Mammary epithelial cell (primary cell): ENCODE measurements at regions of chr16 and their contacts with region 1.

Region 1: GRCh38 chr16:74695450-74696422 is 4.9 kb downstream of the MLKL start:
- DNase-seq: peak; percentile 83
- H3K4me3 ChIP-seq: peak overlapping the region; percentile 38 to 49 (median 46)
- H3K27ac ChIP-seq: no peak overlapping the region
- H3K4me1 ChIP-seq: peaks cover 17% of the 10 kb centered on the region
- H3K27me3 ChIP-seq: no peaks in the 10 kb centered on the region
- CTCF ChIP-seq: no peak

Region 2: DNA sequence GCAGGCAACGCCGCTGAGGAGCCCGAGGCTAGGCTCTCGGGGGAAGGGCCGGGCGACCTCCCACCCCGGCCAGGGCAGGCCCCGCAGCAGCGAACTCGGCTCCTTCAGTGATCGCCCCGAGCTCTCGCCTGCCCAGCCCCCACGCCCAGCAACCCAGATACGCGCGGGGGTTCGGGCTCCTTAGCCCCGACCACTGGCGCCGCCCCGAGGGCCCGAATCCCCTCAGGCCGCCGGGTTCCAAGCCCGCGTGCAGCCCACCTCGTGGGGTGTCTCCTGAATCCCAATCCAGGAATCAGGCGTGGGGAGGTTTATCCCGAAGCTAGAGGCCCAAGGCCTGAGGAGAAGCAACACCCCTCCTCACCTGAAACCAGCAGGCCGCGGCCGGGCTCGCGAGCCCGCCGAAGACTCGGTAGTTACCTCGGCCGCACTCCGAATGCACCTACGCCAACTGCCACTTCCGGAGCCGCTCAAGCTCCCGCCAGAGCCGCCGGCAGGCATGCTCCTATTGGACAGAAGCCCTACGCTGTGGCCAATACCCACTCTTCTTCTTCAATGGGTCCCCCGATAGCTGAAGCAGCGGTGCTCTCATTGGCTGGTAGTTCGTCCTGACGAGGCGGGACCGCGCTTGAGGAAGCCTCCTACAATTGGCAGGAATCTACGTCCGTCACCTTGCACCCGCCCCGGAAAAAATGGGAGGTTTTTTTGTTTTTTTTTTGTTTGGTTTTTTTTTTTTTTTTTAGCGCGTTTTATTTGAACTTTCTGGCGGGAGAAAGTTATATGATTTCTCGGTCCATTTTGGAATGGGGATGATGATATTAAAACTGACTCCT is 29.1 kb before region 1 on chr16 and contains the start of gene RFWD3:
- CTCF ChIA-PET with region 1: no interaction called
- dilution Hi-C with region 1: no loop called
- in situ Hi-C with region 1: no loop called
- intact Hi-C with region 1: loop called (anchors 2 kb)
- DNase-seq: peak; percentile 97
- H3K4me3 ChIP-seq: peak within 1 kb of the TSS; percentile 84 to 96 (median 95)
- H3K27ac ChIP-seq: peak within 1 kb of the TSS; percentile 93
- H3K4me1 ChIP-seq: peaks cover 6% of the 10 kb centered on the region
- H3K27me3 ChIP-seq: no peaks in the 10 kb centered on the region
- CTCF ChIP-seq: no peak
- total RNA-seq, gene RFWD3: 33.2 to 59.3 TPM

Region 3: GRCh38 chr16:74680681-74681080 is 15.1 kb before region 1 on chr16:
- CTCF ChIA-PET with region 1: interaction called, 10 read pairs
- dilution Hi-C with region 1: no loop called
- in situ Hi-C with region 1: no loop called
- intact Hi-C with region 1: no loop called
- DNase-seq: no peak
- H3K4me3 ChIP-seq: no peak overlapping the region
- H3K27ac ChIP-seq: no peak overlapping the region
- H3K4me1 ChIP-seq: no peaks in the 10 kb centered on the region
- H3K27me3 ChIP-seq: no peaks in the 10 kb centered on the region
- CTCF ChIP-seq: no peak

Region 4: DNA sequence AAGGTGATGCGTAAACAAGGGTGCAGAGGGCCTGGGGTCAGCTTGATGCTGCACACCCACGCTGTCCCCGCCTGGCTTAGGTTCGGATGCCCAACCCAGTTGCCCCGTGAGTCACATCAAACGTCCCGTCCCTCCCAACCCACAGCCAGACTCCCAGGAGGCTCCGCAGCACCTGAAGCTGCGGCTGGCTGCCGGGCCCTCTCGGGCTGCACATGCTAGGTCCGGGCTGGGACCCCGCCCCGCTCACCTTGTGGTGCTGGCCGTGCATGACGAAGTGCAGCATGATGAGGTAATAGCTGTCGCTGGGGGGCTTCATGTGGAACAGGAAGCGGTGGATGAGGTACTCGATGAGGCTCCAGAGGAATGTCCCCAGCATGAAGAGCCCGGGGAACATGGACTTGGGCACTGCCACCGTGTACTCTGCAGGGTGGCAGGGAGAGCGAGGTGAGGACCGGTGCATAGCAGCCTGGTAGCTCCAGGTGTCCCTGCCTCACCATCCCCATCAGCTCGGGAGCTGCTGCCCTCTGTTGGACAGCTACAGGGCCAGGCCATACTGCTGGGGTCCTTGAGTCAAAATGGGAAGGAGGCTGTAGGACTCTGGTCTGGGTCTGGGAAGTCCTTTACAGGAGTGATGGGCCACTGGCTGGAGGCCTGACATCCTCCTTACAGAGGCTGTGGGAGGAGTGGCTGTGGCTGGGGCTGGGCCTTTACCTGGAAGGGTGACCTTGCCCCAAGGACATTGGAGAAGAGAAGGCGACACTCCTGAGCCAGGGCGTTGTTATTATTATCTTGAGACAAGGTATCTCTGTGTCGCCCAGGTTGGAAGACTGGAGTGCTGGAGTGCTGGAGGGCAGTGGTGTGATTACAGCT is 23.2 kb after region 1 on chr16:
- CTCF ChIA-PET with region 1: interaction called, 16 read pairs
- dilution Hi-C with region 1: no loop called
- in situ Hi-C with region 1: no loop called
- intact Hi-C with region 1: no loop called
- DNase-seq: no peak
- H3K4me3 ChIP-seq: no peak overlapping the region
- H3K27ac ChIP-seq: no peak overlapping the region
- H3K4me1 ChIP-seq: no peaks in the 10 kb centered on the region
- H3K27me3 ChIP-seq: no peaks in the 10 kb centered on the region
- CTCF ChIP-seq: no peak

Region 5: GRCh38 chr16:74743668-74744299 is 48.0 kb after region 1 on chr16:
- CTCF ChIA-PET with region 1: no interaction called
- dilution Hi-C with region 1: loop called (anchors 5 kb)
- in situ Hi-C with region 1: no loop called
- intact Hi-C with region 1: no loop called
- DNase-seq: peak; percentile 65
- H3K4me3 ChIP-seq: no peak overlapping the region
- H3K27ac ChIP-seq: peak overlapping the region; percentile 65
- H3K4me1 ChIP-seq: peaks cover 37% of the 10 kb centered on the region
- H3K27me3 ChIP-seq: no peaks in the 10 kb centered on the region
- CTCF ChIP-seq: no peak

Region 6: DNA sequence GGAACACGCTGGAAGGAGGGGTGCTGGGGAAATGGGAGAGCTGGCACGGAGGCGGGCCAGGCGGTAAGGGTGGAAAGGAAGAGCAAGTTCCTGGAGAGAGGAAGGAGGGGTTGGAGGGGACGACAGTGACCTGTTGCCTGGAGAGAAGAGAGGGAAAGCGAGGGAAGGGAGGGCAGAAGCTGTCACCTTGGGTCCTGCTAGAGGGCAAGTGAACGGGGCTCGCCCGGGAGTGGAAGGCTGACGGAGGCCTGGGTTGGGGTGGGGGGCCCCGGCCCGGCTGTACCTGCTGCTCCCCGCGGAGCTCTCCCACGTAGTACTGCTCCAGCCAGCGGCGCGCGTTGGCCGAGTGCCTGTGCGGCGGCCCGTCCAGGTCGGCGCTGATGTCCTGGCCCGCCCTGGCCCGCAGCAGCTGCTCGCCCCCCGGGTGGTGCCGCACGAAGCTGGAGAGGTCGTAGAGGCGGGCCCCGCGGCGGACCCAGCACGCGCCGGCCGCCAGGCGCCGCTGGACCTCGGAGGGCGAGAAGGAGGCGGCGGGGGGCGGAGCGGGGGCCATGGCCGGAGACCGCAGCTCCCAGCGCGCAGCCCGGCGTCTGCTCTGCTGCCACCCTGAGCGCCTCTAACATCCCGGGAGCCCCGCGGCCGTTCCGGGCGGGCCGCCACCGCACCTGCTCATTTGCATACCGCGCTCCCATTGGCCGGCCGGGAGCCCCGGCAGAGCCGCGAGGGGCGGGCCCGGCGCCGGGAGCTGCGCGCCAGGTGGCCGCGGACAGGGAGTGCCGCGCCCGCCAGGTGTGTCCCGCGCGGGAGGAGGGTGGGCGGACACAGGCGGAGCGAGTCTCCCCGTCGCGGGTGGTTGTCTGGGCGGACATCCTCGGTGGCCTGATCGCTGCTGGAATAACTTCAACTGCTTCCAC is 78.7 kb after region 1 on chr16 and contains the start of gene FA2H:
- CTCF ChIA-PET with region 1: no interaction called
- dilution Hi-C with region 1: no loop called
- in situ Hi-C with region 1: no loop called
- intact Hi-C with region 1: no loop called
- DNase-seq: peak; percentile 85
- H3K4me3 ChIP-seq: peak within 1 kb of the TSS; percentile 36 to 53 (median 49)
- H3K27ac ChIP-seq: no peak within 1 kb of the TSS
- H3K4me1 ChIP-seq: peaks cover 10% of the 10 kb centered on the region
- H3K27me3 ChIP-seq: no peaks in the 10 kb centered on the region
- CTCF ChIP-seq: peak in 1 of 2 donors; percentile 1
- total RNA-seq, gene FA2H: not detected

Region 7: GRCh38 chr16:74813109-74813641 is 117.4 kb after region 1 on chr16:
- CTCF ChIA-PET with region 1: no interaction called
- dilution Hi-C with region 1: no loop called
- in situ Hi-C with region 1: no loop called
- intact Hi-C with region 1: no loop called
- DNase-seq: peak; percentile 52
- H3K4me3 ChIP-seq: no peak overlapping the region
- H3K27ac ChIP-seq: no peak overlapping the region
- H3K4me1 ChIP-seq: peaks cover 5% of the 10 kb centered on the region
- H3K27me3 ChIP-seq: no peaks in the 10 kb centered on the region
- CTCF ChIP-seq: peak; percentile 88 to 97

Region 8: GRCh38 chr16:74841469-74841868 is 145.7 kb after region 1 on chr16:
- CTCF ChIA-PET with region 1: interaction called, 22 read pairs
- dilution Hi-C with region 1: no loop called
- in situ Hi-C with region 1: no loop called
- intact Hi-C with region 1: no loop called
- DNase-seq: no peak
- H3K4me3 ChIP-seq: no peak overlapping the region
- H3K27ac ChIP-seq: no peak overlapping the region
- H3K4me1 ChIP-seq: peaks cover 16% of the 10 kb centered on the region
- H3K27me3 ChIP-seq: no peaks in the 10 kb centered on the region
- CTCF ChIP-seq: no peak